Activated B cell treated with CpG ODN at 0.5 μM for 24 hours (primary cell): ENCODE measurements at regions of chr3 and their contacts with region 1.

Region 1: DNA sequence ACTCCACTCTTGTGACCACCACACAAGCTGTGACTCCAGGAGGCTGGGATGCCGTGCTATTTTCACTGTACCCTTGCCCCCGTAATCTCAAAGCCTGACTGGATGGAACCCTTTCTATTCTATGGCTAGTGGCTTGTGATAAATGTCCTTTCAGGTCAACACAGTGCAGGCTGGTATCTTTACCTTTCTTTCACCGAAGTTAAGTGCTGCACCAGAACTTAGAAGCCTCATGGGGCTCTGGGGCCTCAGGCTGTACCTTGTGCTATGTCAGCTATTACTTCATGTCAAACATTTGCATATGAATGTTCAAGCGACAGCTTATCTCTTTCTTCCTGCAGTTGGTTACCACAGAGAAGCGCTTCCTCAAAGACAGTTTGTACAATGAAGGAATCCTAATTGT is 66.8 kb downstream of the RPL39L start:
- DNase-seq: no peak
- ATAC-seq: peak; percentile 84
- H3K4me3 Mint-ChIP-seq: peak overlapping the region; percentile 52
- H3K27ac Mint-ChIP-seq: peak overlapping the region; percentile 82
- H3K4me1 Mint-ChIP-seq: peaks cover 58% of the 10 kb centered on the region
- H3K27me3 Mint-ChIP-seq: no peaks in the 10 kb centered on the region
- CTCF ChIP-seq: no peak

Region 2: GRCh38 chr3:187088701-187089100 is 16.2 kb after region 1 on chr3:
- CTCF ChIA-PET with region 1: no interaction called
- POLR2A ChIA-PET with region 1: interaction called, 6 read pairs
- intact Hi-C with region 1: loop called (anchors 2 kb)
- DNase-seq: no peak
- ATAC-seq: no peak
- H3K4me3 Mint-ChIP-seq: no peak overlapping the region
- H3K27ac Mint-ChIP-seq: no peak overlapping the region
- H3K4me1 Mint-ChIP-seq: peaks cover 8% of the 10 kb centered on the region
- H3K27me3 Mint-ChIP-seq: no peaks in the 10 kb centered on the region
- CTCF ChIP-seq: no peak